Activated CD4-positive, alpha-beta memory T cell treated with anti-CD3 and anti-CD28 coated beads for 36 hours (primary cell): ENCODE measurements at regions of chr22 and their contacts with region 1.

Region 1: GRCh38 chr22:37260901-37261336 is 16.9 kb upstream of the RAC2 start:
- DNase-seq: peak; percentile 76
- H3K4me3 Mint-ChIP-seq: peak overlapping the region; percentile 17
- H3K27ac Mint-ChIP-seq: peak overlapping the region; percentile 65
- H3K4me1 Mint-ChIP-seq: peaks cover 20% of the 10 kb centered on the region
- H3K27me3 Mint-ChIP-seq: no peaks in the 10 kb centered on the region

Region 2: GRCh38 chr22:36671404-36671803 is 589.5 kb before region 1 on chr22:
- CTCF ChIA-PET with region 1: no interaction called
- POLR2A ChIA-PET with region 1: no interaction called
- intact Hi-C with region 1: no loop called
- DNase-seq: no peak
- H3K4me3 Mint-ChIP-seq: no peak overlapping the region
- H3K27ac Mint-ChIP-seq: no peak overlapping the region
- H3K4me1 Mint-ChIP-seq: no peaks in the 10 kb centered on the region
- H3K27me3 Mint-ChIP-seq: peaks cover 10% of the 10 kb centered on the region

Region 3: GRCh38 chr22:37218771-37219411 is 42.0 kb before region 1 on chr22:
- CTCF ChIA-PET with region 1: interaction called, 32 read pairs
- POLR2A ChIA-PET with region 1: no interaction called
- intact Hi-C with region 1: loop called (anchors 5 kb)
- DNase-seq: peak; percentile 85
- H3K4me3 Mint-ChIP-seq: peak overlapping the region; percentile 76
- H3K27ac Mint-ChIP-seq: peak overlapping the region; percentile 95
- H3K4me1 Mint-ChIP-seq: peaks cover 76% of the 10 kb centered on the region
- H3K27me3 Mint-ChIP-seq: no peaks in the 10 kb centered on the region

Region 4: GRCh38 chr22:37273126-37273845 is 12.4 kb after region 1 on chr22:
- CTCF ChIA-PET with region 1: interaction called, 57 read pairs
- POLR2A ChIA-PET with region 1: no interaction called
- intact Hi-C with region 1: no loop called
- DNase-seq: peak; percentile 68
- H3K4me3 Mint-ChIP-seq: no peak overlapping the region
- H3K27ac Mint-ChIP-seq: peak overlapping the region; percentile 45
- H3K4me1 Mint-ChIP-seq: peaks cover 65% of the 10 kb centered on the region
- H3K27me3 Mint-ChIP-seq: peaks cover 2% of the 10 kb centered on the region

Region 5: DNA sequence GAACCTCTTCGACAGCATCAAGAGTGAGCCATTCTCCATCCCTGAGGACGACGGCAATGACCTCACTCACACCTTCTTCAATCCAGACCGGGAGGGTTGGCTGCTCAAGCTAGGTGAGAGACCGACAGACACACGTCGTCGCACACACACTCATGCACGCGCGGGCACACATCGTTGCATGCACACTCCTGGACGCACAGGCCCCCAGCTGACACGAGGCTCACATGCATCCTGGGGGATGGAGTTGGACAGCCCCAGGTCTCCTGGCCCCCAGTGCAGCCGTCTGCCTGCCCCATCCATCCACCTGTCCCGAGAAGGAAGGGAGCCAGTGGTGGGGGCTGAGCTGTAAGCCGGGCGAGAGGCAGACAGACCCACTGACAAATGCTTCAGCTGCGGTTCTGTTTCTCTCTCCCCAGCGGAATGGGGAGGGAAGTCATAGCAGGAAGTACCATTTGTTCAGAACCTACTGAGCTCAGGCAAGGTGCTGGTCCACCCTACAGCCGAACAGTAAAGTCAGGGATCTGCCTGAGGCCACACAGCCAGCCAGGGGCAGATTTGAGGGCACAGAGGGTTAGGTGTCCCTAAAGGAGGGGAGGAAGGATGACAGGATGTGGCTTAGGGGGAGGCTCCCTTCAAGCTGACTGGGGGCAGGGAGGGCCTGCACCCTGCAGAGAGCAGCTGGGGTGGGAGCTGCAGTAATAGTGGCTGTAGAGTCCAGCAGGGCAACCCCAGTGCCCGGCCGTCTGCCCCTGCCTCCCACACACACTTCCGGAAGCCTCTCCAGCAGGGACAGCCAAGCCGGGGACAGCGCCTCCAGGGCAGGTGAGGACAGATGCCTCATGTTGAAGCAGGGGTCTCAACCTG is 48.5 kb after region 1 on chr22:
- CTCF ChIA-PET with region 1: interaction called, 12 read pairs
- POLR2A ChIA-PET with region 1: no interaction called
- intact Hi-C with region 1: no loop called
- DNase-seq: peak; percentile 73
- H3K4me3 Mint-ChIP-seq: no peak overlapping the region
- H3K27ac Mint-ChIP-seq: peak overlapping the region; percentile 59
- H3K4me1 Mint-ChIP-seq: peaks cover 84% of the 10 kb centered on the region
- H3K27me3 Mint-ChIP-seq: no peaks in the 10 kb centered on the region

Region 6: GRCh38 chr22:37457093-37457893 is 196.4 kb after region 1 on chr22:
- CTCF ChIA-PET with region 1: interaction called, 34 read pairs
- POLR2A ChIA-PET with region 1: no interaction called
- intact Hi-C with region 1: no loop called
- DNase-seq: peak; percentile 89
- H3K4me3 Mint-ChIP-seq: no peak overlapping the region
- H3K27ac Mint-ChIP-seq: no peak overlapping the region
- H3K4me1 Mint-ChIP-seq: no peaks in the 10 kb centered on the region
- H3K27me3 Mint-ChIP-seq: no peaks in the 10 kb centered on the region